K562 (cell line): ENCODE measurements at regions of chr6 and their contacts with region 1.

Region 1: GRCh38 chr6:145704143-145704781 is 31.1 kb downstream of the EPM2A start:
- DNase-seq: peak in 2 of 4 experiments; percentile 11 to 16
- ATAC-seq: no peak
- H3K4me3 ChIP-seq: no peak overlapping the region
- H3K27ac ChIP-seq: no peak overlapping the region
- H3K4me1 ChIP-seq: no peaks in the 10 kb centered on the region
- H3K27me3 ChIP-seq: no peaks in the 10 kb centered on the region
- CTCF ChIP-seq: peak in 2 of 3 experiments; percentile 20 to 61; a peak in 3 of 6 replicates
- EP300 ChIP-seq: no peak
- POLR2A ChIP-seq: no peak
- RAD21 ChIP-seq: peak; percentile 31 to 47

Region 2: DNA sequence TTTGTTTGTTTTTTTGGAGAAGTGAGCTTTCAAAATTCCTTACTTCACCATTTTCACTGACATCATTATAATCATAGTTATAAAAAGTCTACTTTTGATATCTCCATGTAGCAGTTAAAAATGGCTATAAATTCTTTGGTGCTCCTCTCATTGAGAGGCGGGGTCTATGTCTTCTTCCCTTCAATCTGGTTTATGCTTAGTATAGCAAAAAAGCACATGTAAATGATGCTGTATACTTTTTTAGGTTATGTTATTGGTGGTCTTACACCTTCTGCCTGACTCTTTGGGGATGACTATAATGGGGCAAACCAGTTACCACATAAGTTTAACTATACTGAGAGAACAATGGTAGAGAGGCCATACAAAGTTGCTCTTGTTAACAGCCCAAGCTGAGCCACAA is 258.6 kb before region 1 on chr6:
- CTCF ChIA-PET with region 1: no interaction called
- POLR2A ChIA-PET with region 1: no interaction called
- in situ Hi-C with region 1: no loop called
- intact Hi-C with region 1: loop called (anchors 10 kb)
- DNase-seq: no peak
- ATAC-seq: no peak
- H3K4me3 ChIP-seq: no peak overlapping the region
- H3K27ac ChIP-seq: no peak overlapping the region
- H3K4me1 ChIP-seq: no peaks in the 10 kb centered on the region
- H3K27me3 ChIP-seq: no peaks in the 10 kb centered on the region
- CTCF ChIP-seq: no peak
- EP300 ChIP-seq: no peak
- POLR2A ChIP-seq: no peak
- RAD21 ChIP-seq: no peak

Region 3: DNA sequence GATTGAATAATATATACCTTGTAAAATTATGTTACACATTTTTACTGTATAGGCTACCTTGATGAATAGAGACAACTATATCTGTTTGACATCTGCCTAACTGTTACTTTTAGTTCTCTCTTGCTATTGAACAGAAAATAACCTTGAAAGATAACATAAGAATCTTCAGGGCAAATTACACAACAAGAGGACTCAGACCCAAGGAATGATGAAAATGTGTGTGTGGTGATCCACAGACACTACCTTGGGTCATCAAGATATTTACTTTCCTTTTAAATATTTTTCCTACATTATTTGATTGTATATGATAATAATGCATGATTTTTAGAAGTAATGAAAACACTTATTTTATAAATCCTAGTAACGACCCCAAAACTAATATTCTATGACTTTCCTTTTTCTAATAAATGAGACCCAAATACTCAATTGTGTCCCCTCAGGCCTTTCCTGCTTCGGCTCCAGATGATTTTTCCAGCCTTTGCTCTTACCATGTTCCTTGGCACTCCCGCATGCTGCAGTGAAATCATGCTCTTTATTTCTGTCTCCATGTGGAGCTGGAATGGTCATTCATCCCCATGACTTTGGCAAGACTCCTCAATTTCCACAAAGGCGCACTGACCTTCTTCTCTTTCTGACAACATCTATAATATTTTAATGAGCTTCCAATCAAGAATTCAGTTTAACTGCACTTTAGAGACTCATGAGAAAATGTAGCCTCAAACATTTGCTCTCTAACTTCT is 156.5 kb before region 1 on chr6:
- CTCF ChIA-PET with region 1: no interaction called
- POLR2A ChIA-PET with region 1: no interaction called
- in situ Hi-C with region 1: no loop called
- intact Hi-C with region 1: no loop called
- DNase-seq: no peak
- ATAC-seq: no peak
- H3K4me3 ChIP-seq: no peak overlapping the region
- H3K27ac ChIP-seq: no peak overlapping the region
- H3K4me1 ChIP-seq: no peaks in the 10 kb centered on the region
- H3K27me3 ChIP-seq: no peaks in the 10 kb centered on the region
- CTCF ChIP-seq: no peak
- EP300 ChIP-seq: no peak
- POLR2A ChIP-seq: no peak
- RAD21 ChIP-seq: no peak

Region 4: DNA sequence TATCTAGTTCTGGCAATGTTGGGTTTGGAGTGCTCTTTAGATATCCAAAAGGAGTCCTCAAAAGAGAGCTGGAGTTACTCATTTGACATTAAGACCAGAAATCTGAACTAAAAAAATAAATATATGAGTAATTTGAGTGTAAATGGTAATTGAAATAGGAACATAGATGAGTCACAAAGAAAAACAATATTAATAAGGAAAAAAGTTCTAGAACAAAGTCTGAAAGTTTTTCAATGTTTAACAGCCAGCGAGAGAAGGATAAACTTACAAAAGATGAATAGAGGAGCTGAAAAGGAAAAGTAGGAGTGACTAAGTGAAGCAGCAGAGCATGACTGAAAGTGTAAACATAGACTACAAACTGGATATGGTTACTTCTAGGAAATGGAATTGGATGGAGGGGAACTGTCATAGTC is 15.8 kb before region 1 on chr6:
- CTCF ChIA-PET with region 1: no interaction called
- POLR2A ChIA-PET with region 1: no interaction called
- in situ Hi-C with region 1: no loop called
- intact Hi-C with region 1: no loop called
- DNase-seq: no peak
- ATAC-seq: no peak
- H3K4me3 ChIP-seq: no peak overlapping the region
- H3K27ac ChIP-seq: no peak overlapping the region
- H3K4me1 ChIP-seq: no peaks in the 10 kb centered on the region
- H3K27me3 ChIP-seq: no peaks in the 10 kb centered on the region
- CTCF ChIP-seq: no peak
- EP300 ChIP-seq: no peak
- POLR2A ChIP-seq: no peak
- RAD21 ChIP-seq: no peak

Region 5: GRCh38 chr6:145714731-145715130 is 10.5 kb after region 1 on chr6:
- CTCF ChIA-PET with region 1: no interaction called
- POLR2A ChIA-PET with region 1: no interaction called
- in situ Hi-C with region 1: no loop called
- intact Hi-C with region 1: no loop called
- DNase-seq: no peak
- ATAC-seq: no peak
- H3K4me3 ChIP-seq: no peak overlapping the region
- H3K27ac ChIP-seq: no peak overlapping the region
- H3K4me1 ChIP-seq: no peaks in the 10 kb centered on the region
- H3K27me3 ChIP-seq: no peaks in the 10 kb centered on the region
- CTCF ChIP-seq: no peak
- EP300 ChIP-seq: no peak
- POLR2A ChIP-seq: no peak
- RAD21 ChIP-seq: no peak